ENCODE measurements at regions of chrX and their contacts with region 1.

Region 1: DNA sequence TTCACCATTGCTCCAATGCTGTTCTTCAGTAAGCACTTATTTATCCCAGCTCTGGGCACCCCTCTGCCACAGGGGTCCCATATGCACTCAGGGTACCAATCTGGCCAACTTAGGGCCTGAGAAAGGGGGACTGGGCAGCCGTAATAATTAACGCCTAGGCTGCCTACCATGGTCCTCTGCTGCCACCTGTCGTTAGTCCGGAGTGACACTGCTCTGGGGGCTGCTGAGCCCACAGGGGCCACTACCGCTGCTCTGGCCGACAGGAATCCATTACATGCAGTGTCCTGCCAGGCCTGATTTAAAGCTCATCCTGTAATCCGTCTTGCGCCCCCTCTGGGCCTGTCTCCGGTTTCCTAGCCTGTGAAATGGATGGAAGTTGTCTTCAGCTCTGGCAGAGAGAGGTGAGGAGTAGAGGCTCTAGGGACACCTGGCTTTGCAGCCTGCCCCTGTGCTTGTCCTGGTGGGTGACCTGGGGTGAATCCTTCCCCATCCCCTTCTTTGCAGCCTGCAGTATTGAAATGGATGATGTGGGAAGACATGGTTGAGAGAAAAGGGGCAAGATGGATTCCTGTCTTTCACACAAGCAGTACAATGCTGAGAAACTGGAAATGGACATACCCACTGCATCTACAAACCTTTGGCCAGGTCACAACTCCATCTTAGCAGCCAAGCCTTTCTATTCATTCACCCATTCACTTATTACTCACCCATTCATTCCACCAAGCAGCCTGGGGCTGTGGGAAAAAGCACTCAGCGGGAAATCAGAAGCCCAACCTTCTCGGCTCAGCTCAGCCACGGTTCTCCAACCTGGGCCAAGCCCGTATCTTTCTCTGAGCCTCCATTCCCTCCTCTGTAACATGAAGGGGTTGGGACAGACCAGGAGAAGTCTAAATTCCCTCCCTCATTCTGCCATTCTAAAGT is 116.3 kb upstream of the NALF2 start:
- DNase-seq: peak; percentile 46
- ATAC-seq: peak; percentile 62 to 82

Region 2: GRCh38 chrX:68822641-68823410 is 565.0 kb before region 1 on chrX:
- intact Hi-C with region 1: loop called (anchors 5 to 10 kb)
- DNase-seq: peak; percentile 56
- ATAC-seq: peak; percentile 89 to 91

Measured in left cardiac atrium (tissue), 4 donors.